ENCODE measurements at regions of chr6 and their contacts with region 1.

Region 1: GRCh38 chr6:167356874-167357273 is 32.0 kb downstream of the TTLL2 start:
- H3K4me3 Mint-ChIP-seq: no peak overlapping the region
- H3K27ac Mint-ChIP-seq: no peak overlapping the region
- H3K4me1 Mint-ChIP-seq: no peaks in the 10 kb centered on the region
- H3K27me3 Mint-ChIP-seq: peaks cover 16% of the 10 kb centered on the region

Region 2: GRCh38 chr6:167200806-167201205 is 156.1 kb before region 1 on chr6:
- intact Hi-C with region 1: loop called (anchors 10 kb)
- H3K4me3 Mint-ChIP-seq: no peak overlapping the region
- H3K27ac Mint-ChIP-seq: no peak overlapping the region
- H3K4me1 Mint-ChIP-seq: no peaks in the 10 kb centered on the region
- H3K27me3 Mint-ChIP-seq: peaks cover 13% of the 10 kb centered on the region

Measured in dendritic cell treated with granulocyte-macrophage colony-stimulating factor and Interleukin-4, amounts not matched to agents 40 ng/mL and 50 ng/mL, for 4 days (primary cell).